SK-N-SH (cell line): ENCODE measurements at regions of chr1 and their contacts with region 1.

Region 1: DNA sequence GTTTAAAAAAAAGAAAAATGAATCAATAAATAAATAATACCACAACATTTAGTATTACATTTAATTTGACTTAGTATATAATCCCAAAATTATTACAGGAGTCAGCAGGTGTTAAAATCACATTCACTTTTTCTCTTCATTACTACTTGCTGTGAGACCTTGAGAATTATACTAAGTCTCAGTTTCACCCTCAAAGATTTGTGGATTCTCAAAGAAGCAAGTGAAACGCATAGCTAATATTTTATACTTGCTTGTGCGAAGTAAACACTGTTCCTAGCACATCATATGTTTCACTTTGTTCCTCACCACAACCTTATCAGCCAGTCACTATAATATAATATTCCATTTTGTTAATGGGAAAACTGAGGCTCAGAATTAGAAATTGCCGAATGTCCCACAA is 4.0 kb downstream of the CLCA1 start:
- DNase-seq: no peak
- H3K4me3 ChIP-seq: no peak overlapping the region
- H3K27ac ChIP-seq: no peak overlapping the region
- H3K4me1 ChIP-seq: no peaks in the 10 kb centered on the region
- H3K27me3 ChIP-seq: peaks cover 5% of the 10 kb centered on the region; the same call in 1 of the 2 replicates
- CTCF ChIP-seq: no peak
- EP300 ChIP-seq: no peak
- RAD21 ChIP-seq: no peak

Region 2: GRCh38 chr1:86380257-86380861 is 92.4 kb before region 1 on chr1:
- CTCF ChIA-PET with region 1: interaction called, 19 read pairs
- POLR2A ChIA-PET with region 1: no interaction called
- DNase-seq: peak; percentile 41
- H3K4me3 ChIP-seq: peak overlapping the region in 1 of 2 experiments; percentile 23; a peak in 1 of 4 replicates
- H3K27ac ChIP-seq: no peak overlapping the region
- H3K4me1 ChIP-seq: no peaks in the 10 kb centered on the region; a peak in 1 of 4 replicates
- H3K27me3 ChIP-seq: no peaks in the 10 kb centered on the region
- CTCF ChIP-seq: peak; percentile 78
- EP300 ChIP-seq: no peak
- RAD21 ChIP-seq: peak; percentile 90

Region 3: GRCh38 chr1:86487131-86487810 is 14.5 kb after region 1 on chr1:
- CTCF ChIA-PET with region 1: interaction called, 12 read pairs
- POLR2A ChIA-PET with region 1: no interaction called
- DNase-seq: no peak
- H3K4me3 ChIP-seq: no peak overlapping the region
- H3K27ac ChIP-seq: no peak overlapping the region
- H3K4me1 ChIP-seq: no peaks in the 10 kb centered on the region; a peak in 1 of 4 replicates
- H3K27me3 ChIP-seq: no peaks in the 10 kb centered on the region
- CTCF ChIP-seq: no peak
- EP300 ChIP-seq: 0 out of 4 replicates have a peak, but pooled peaks of 1 of the 2 experiments have one; percentile 24
- RAD21 ChIP-seq: no peak

Region 4: GRCh38 chr1:86499987-86500593 is 27.3 kb after region 1 on chr1:
- CTCF ChIA-PET with region 1: interaction called, 35 read pairs
- POLR2A ChIA-PET with region 1: no interaction called
- DNase-seq: peak; percentile 25
- H3K4me3 ChIP-seq: peak overlapping the region in 1 of 2 experiments; percentile 43; a peak in 1 of 4 replicates
- H3K27ac ChIP-seq: no peak overlapping the region
- H3K4me1 ChIP-seq: no peaks in the 10 kb centered on the region; a peak in 1 of 4 replicates
- H3K27me3 ChIP-seq: peaks cover 5% of the 10 kb centered on the region; the same call in 1 of the 2 replicates
- CTCF ChIP-seq: peak; percentile 99
- EP300 ChIP-seq: no peak
- RAD21 ChIP-seq: no peak; the same call in 1 of the 2 replicates

Region 5: DNA sequence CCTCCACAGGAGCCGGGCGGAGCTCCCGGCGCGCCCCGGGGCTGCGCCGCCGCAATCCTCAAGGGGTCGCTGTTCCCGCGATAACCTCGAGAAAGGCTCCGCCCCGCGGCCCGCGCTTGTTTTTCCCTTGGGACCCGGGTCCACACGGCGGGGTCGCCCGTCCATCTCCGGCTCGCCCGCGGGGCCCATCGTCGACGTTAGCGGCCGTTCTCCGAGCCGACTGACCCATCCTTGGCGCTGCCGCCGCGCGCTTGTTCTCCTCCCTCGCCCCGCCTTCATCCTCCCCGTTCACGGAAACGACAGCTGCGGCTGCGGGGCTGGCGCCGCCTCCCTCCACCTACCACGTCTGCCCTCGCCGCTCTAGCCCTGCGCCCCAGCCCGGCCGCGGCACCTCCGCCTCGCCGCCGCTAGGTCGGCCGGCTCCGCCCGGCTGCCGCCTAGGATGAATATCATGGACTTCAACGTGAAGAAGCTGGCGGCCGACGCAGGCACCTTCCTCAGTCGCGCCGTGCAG is 231.7 kb after region 1 on chr1 and contains the start of gene SH3GLB1:
- CTCF ChIA-PET with region 1: interaction called, 15 read pairs
- POLR2A ChIA-PET with region 1: no interaction called
- DNase-seq: peak; percentile 91
- H3K4me3 ChIP-seq: peak within 1 kb of the TSS; percentile 84 to 92
- H3K27ac ChIP-seq: peak within 1 kb of the TSS; percentile 89 to 93
- H3K4me1 ChIP-seq: peaks cover 0 to 8% of the 10 kb centered on the region in 2 experiments; a peak in 2 of 4 replicates
- H3K27me3 ChIP-seq: no peaks in the 10 kb centered on the region
- CTCF ChIP-seq: peak; percentile 88
- EP300 ChIP-seq: peak in 1 of 2 experiments; percentile 28; a peak in 1 of 4 replicates
- RAD21 ChIP-seq: peak; percentile 50
- polyA plus RNA-seq, gene SH3GLB1: 13.2 and 16.3 TPM in 2 replicates